ENCODE measurements at regions of chr1 and their contacts with region 1.

Region 1: DNA sequence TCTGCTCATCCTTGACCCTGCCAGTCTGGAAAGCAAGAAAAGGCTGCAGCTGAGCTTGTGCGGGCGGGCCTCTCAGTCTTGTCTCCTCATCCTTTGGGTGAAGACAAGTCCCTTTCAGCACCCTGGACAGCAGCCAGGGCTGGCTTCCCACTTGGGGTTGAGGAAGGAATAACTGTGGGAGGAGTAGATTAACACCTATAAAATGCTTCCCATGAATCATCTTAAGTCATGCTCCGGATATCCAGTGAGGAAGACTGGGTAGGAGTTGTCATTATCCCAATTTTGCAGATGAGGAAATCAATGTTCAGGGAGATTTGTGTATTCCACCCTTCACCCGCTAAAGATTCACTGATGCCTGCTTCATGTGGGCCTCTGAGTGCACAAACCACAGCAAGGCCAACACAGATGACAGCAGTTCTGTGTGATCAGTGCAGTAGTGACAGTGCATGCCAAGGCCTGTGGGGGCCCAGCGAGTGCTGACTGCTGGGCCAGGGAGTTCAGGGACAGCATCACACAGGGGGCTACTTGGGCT is 20.1 kb upstream of the COL16A1 start:
- DNase-seq: peak in 1 of 2 donors; percentile 53
- H3K4me3 ChIP-seq: no peak overlapping the region
- H3K27ac ChIP-seq: no peak overlapping the region
- H3K4me1 ChIP-seq: no peaks in the 10 kb centered on the region
- H3K27me3 ChIP-seq: peaks cover 0 to 4% of the 10 kb centered on the region in 2 donors
- CTCF ChIP-seq: no peak

Region 2: DNA sequence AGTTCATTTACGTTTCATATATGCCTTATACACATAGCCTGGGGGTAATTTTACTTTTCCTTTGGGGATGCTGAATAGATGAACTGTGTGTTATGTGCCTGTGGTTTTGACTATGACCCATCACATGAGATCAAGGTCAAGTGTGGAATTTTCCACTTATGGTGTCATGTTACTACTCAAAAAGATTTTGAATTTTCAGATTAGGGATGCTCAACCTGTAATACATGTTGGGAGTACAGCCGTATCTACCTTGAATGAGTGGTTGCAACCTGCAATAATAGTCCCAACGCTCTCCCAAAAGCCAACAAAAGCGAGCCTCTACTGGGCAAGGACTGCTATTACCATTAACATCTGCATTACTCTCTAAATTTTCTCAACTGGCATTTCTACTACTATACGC is 746.8 kb before region 1 on chr1:
- intact Hi-C with region 1: loop called (anchors 10 kb)
- DNase-seq: no peak
- H3K4me3 ChIP-seq: no peak overlapping the region
- H3K27ac ChIP-seq: peak overlapping the region in 1 of 2 donors; percentile 8
- H3K4me1 ChIP-seq: peaks cover 0 to 45% (median 22%) of the 10 kb centered on the region in 4 donors
- H3K27me3 ChIP-seq: no peaks in the 10 kb centered on the region
- CTCF ChIP-seq: peak in 1 of 2 experiments; percentile 7

Region 3: DNA sequence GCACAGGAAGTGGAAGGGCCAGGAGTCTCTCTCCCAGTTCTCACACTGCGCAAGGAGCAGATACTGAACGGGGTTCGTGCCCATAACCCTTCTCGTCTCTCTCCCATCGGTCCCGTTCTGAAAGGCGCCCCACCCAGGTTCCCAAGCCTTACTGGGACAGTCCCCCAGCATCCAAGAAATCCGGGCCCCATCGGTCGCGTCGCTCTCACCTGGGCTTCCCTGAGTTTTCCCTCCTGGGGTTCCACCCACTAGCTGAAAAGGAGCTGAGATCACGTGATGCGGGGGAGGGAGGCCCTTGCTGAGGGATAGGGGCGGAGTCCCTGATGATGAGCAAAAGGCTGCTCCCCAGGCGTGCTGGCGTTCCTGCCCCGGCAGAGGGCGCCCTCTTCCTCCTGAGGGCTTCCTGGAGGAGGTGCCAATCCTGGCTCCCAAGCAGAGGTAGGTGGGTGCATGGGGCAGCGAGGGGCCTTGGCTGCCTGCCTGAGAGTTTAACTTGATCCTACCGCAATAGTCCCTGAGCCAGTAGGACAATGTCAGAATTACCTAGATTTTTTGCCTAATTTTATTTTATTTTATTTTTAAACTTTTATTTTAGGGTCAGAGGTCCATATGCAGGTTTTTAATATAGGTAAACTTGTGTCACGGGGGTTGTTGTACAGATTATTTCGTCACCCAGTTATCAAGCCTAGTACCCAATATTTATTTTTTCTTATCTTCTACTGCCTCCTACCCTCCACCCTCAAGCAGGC is 92.0 kb after region 1 on chr1 and contains the start of gene SPOCD1:
- intact Hi-C with region 1: no loop called
- DNase-seq: peak; percentile 75 to 83
- H3K4me3 ChIP-seq: peak within 1 kb of the TSS in 1 of 2 donors; percentile 25
- H3K27ac ChIP-seq: no peak within 1 kb of the TSS
- H3K4me1 ChIP-seq: no peaks in the 10 kb centered on the region
- H3K27me3 ChIP-seq: no peaks in the 10 kb centered on the region
- CTCF ChIP-seq: peak; percentile 60 to 63